Uterus (tissue), 4 donors: ENCODE measurements at regions of chr10 and their contacts with region 1.

Region 1: GRCh38 chr10:125982260-125982948 is 86.0 kb downstream of the FANK1 start:
- DNase-seq: peak in 1 of 2 donors; percentile 41
- H3K4me3 ChIP-seq: no peak overlapping the region
- H3K27ac ChIP-seq: no peak overlapping the region
- H3K4me1 ChIP-seq: no peaks in the 10 kb centered on the region
- H3K27me3 ChIP-seq: no peaks in the 10 kb centered on the region
- CTCF ChIP-seq: peak; percentile 61 to 82 (median 70)
- POLR2A ChIP-seq: no peak

Region 2: DNA sequence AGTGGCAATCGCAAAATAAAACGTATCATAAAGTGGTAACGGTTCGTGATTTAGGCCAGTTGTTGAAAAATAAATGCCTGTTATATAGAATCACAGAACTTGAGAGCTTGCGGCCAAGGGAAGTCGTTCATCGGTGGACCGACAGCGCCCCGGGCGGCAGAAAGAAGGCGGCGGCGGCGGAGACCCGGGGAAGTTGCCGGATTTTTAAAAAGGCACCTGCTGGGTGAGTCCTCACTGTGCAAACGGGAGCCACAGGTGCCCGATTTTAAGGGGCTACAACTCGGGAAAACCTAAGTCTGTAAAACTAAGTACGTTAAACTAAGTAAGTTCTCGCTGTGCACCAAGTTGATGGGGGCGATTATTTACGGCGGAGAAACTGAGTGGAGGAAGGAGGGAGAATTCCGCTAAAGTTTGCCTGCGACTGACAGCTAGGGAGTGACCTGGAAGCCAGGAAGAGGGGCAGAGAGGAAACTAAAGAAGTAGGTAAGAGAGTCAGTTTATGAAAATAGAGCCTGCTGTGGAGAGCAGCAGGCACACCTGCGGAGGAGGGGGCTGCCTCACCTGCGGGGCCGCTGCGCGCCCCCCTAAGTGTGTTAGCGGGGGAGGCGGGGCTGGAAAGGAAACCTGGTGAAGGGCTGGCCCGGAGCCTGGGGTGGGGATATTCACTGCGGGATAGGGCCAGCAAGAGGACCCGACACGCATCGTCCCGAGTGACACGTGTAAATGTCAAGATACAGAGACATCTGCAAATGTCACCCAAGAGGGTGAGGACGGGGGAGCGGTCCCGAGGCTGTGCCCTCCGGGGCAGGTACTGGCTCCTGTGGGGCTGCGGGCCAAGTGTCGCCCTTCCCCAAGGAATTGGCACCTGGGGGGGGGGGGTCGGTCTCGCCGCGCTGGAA is 404.9 kb after region 1 on chr10:
- intact Hi-C with region 1: loop called (anchors 10 kb)
- DNase-seq: peak; percentile 58 to 66
- H3K4me3 ChIP-seq: peak overlapping the region; percentile 12 to 62
- H3K27ac ChIP-seq: peak overlapping the region in 1 of 2 donors; percentile 8
- H3K4me1 ChIP-seq: peaks cover 6 to 10% of the 10 kb centered on the region in 2 donors
- H3K27me3 ChIP-seq: no peaks in the 10 kb centered on the region
- CTCF ChIP-seq: peak; percentile 64 to 83 (median 72)
- POLR2A ChIP-seq: no peak